ENCODE measurements at regions of chr10 and their contacts with region 1.

Region 1: DNA sequence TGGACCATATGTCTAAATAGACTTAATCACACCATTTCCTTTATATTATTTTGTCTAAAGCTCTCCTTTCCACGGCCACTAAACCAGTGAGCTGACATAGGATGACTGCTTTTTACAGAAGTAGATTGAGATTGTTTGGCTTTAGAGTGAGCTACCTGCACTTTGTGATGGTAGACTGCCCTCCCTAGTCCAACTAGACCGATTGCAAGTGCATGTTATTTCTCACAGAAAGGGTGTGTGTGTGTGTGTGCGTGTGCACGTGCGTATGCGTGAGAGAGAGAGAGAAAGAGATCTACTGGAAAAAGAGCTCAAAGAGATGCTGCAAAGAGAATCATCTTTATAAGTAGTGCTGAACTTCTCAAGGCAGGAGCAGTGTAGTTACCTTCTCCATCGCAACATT is 60.7 kb downstream of the VCL start:
- DNase-seq: peak; percentile 46
- H3K4me3 Mint-ChIP-seq: peak overlapping the region; percentile 19
- H3K27ac Mint-ChIP-seq: peak overlapping the region; percentile 94
- H3K4me1 Mint-ChIP-seq: peaks cover 62% of the 10 kb centered on the region
- H3K27me3 Mint-ChIP-seq: no peaks in the 10 kb centered on the region
- CTCF ChIP-seq: no peak

Region 2: DNA sequence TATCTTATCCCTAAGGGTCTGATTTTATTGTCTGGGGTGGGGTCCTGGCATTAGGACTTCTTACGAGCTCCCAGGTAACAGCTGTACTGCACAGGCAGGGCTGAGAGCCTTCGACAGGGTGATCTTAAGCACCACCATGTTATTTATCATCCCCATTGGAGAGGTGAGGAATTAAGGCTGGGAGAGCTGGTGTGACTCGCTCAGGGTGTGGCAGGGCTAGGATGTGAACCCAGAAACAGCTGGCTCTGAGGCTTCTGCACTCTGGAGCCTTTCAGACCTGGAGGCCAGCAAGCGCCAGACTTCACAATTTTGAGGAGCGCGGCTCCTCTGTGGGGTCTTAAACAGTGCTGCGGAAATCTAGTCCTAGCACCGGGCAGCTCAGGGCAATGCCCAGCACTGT is 219.8 kb before region 1 on chr10:
- CTCF ChIA-PET with region 1: no interaction called
- intact Hi-C with region 1: no loop called
- DNase-seq: no peak
- H3K4me3 Mint-ChIP-seq: no peak overlapping the region
- H3K27ac Mint-ChIP-seq: no peak overlapping the region
- H3K4me1 Mint-ChIP-seq: peaks cover 6% of the 10 kb centered on the region
- H3K27me3 Mint-ChIP-seq: no peaks in the 10 kb centered on the region
- CTCF ChIP-seq: no peak

Region 3: DNA sequence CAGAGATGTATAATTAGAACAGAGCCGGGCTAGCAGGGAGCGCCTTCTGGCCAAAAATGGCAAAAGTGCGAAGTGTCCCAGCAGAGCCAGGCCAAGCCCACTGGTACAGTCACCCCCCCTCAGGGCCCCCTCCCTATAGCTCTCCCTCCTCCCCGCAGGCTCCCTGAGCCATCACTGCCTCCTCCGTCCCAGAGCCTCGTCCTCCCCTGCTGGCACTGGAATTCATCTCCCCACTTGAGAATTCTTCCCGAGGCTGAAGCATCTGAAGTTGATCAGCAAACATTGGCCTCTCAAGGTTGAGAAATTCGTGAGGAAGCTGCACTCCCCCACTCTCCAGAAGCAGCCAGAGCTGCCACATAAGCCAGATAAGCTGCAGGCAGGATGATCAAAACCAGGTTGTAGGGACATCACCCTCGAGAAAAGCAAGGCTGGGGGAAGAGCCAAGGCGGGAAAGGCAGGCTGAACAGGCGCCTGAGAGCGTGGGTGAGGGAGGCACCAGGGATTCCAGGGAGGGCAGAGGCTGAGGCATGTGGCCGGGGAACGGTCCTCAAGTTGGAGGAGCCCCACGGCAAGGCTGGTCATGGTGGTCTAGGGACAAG is 207.7 kb before region 1 on chr10:
- CTCF ChIA-PET with region 1: no interaction called
- intact Hi-C with region 1: no loop called
- DNase-seq: no peak
- H3K4me3 Mint-ChIP-seq: no peak overlapping the region
- H3K27ac Mint-ChIP-seq: no peak overlapping the region
- H3K4me1 Mint-ChIP-seq: no peaks in the 10 kb centered on the region
- H3K27me3 Mint-ChIP-seq: no peaks in the 10 kb centered on the region
- CTCF ChIP-seq: no peak

Region 4: DNA sequence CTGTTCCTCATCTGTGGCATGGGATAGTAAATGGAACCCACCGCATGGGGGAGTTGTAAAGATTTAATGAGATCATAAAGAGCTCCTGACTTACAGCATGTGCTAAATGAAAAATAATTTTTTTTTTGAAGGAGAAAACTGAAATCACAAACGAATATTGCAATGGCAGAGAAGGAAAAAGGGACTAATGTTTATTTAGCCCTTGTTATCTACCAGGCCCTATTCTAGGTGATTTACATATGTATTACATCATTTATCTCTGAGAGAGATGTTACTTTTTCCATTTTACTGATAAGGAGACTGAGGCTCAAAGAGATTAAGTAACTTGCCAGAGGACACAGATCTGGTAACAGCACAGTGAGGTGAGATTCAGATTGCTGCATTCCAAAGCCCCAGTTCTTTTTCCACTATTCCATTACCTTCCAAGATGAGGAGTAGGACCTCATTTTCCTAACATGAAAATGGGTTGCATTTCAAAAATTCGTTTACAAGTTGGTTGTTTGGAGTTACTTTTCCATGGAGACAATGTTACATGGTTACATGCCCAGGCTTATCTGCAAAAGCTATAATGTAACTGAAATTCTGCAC is 32.1 kb before region 1 on chr10:
- CTCF ChIA-PET with region 1: interaction called, 21 read pairs
- intact Hi-C with region 1: no loop called
- DNase-seq: no peak
- H3K4me3 Mint-ChIP-seq: no peak overlapping the region
- H3K27ac Mint-ChIP-seq: peak overlapping the region; percentile 54
- H3K4me1 Mint-ChIP-seq: peaks cover 41% of the 10 kb centered on the region
- H3K27me3 Mint-ChIP-seq: no peaks in the 10 kb centered on the region
- CTCF ChIP-seq: no peak

Region 5: DNA sequence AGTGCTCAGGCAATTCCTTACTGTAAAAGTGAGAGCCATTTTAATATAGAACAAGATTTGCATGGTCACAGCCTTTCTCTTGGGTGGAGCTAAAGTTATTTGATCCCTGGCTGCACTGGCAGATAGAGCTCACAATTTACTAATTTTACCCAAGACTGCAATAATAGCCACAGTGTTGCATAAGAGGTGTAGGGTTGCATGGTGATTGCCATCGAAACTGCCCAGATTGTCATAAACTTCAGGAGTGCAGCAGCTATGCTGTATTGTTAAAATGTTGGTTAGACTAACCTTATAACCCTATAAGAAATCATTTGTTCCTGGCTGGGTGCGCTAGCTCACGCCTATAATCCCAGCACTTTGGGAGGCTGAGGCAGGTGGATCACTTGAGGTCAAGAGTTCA is 10.8 kb before region 1 on chr10:
- CTCF ChIA-PET with region 1: interaction called, 13 read pairs
- intact Hi-C with region 1: no loop called
- DNase-seq: peak; percentile 57
- H3K4me3 Mint-ChIP-seq: no peak overlapping the region
- H3K27ac Mint-ChIP-seq: peak overlapping the region; percentile 78
- H3K4me1 Mint-ChIP-seq: peaks cover 62% of the 10 kb centered on the region
- H3K27me3 Mint-ChIP-seq: no peaks in the 10 kb centered on the region
- CTCF ChIP-seq: no peak

Region 6: GRCh38 chr10:74071157-74071556 is 12.5 kb after region 1 on chr10:
- CTCF ChIA-PET with region 1: interaction called, 10 read pairs
- intact Hi-C with region 1: loop called (anchors 2 kb)
- DNase-seq: no peak
- H3K4me3 Mint-ChIP-seq: no peak overlapping the region
- H3K27ac Mint-ChIP-seq: peak overlapping the region; percentile 86
- H3K4me1 Mint-ChIP-seq: peaks cover 85% of the 10 kb centered on the region
- H3K27me3 Mint-ChIP-seq: no peaks in the 10 kb centered on the region
- CTCF ChIP-seq: no peak

Region 7: DNA sequence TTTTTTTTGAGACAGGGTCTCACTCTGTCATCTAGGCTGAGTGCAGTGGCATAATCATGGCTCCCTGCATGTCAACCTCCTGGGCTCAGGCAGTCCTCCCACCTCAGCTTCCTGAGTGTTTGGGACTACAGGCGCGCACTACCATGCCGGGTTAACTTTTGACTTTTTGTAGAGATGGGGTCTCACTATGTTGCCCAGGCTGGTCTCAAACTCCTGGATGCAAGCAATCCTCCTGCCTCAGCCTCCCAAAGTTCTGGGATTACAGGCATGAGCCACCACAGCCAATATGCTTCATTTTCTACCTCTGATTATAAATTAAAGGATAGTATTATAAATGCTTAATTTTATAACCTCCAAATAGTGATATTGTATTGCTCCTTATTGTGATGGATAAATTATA is 213.6 kb after region 1 on chr10:
- CTCF ChIA-PET with region 1: no interaction called
- intact Hi-C with region 1: no loop called
- DNase-seq: no peak
- H3K4me3 Mint-ChIP-seq: no peak overlapping the region
- H3K27ac Mint-ChIP-seq: no peak overlapping the region
- H3K4me1 Mint-ChIP-seq: no peaks in the 10 kb centered on the region
- H3K27me3 Mint-ChIP-seq: no peaks in the 10 kb centered on the region
- CTCF ChIP-seq: no peak